ENCODE measurements at regions of chr6 and their contacts with region 1.

Region 1: DNA sequence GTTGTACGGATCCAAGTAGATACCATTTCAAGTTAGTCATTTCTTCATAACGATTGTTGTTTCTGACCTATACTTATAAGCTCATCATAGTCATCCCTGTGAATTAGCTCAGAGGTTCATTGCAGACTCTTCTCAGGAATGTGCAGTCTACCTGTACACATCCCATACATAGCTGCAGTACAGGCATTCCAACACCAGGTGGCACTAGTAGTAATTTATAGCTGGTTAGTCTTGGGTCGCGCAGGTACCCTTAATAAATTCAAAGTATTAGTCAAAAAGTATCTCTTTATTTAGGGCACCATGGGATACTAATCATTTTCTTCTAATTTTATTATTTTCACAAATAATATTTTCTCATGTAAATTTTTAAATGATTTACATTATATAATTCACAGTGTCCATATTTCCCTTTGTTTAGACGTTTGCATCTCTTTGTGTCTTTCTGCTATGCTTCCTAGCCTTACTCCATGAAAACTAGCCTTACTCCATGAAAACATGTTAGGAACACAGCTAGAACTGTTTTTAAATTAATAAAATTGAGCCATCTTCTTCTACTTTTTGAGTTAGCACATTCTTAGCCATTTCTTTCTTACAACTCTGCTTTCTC is 128.6 kb upstream of the FAM83B start:
- DNase-seq: peak in 2 of 4 donors; percentile 40 to 46
- ATAC-seq: peak; percentile 89
- H3K4me3 ChIP-seq: no peak overlapping the region
- H3K27ac ChIP-seq: no peak overlapping the region
- H3K4me1 ChIP-seq: no peaks in the 10 kb centered on the region
- H3K27me3 ChIP-seq: no peaks in the 10 kb centered on the region
- CTCF ChIP-seq: peak; percentile 76 to 82

Region 2: DNA sequence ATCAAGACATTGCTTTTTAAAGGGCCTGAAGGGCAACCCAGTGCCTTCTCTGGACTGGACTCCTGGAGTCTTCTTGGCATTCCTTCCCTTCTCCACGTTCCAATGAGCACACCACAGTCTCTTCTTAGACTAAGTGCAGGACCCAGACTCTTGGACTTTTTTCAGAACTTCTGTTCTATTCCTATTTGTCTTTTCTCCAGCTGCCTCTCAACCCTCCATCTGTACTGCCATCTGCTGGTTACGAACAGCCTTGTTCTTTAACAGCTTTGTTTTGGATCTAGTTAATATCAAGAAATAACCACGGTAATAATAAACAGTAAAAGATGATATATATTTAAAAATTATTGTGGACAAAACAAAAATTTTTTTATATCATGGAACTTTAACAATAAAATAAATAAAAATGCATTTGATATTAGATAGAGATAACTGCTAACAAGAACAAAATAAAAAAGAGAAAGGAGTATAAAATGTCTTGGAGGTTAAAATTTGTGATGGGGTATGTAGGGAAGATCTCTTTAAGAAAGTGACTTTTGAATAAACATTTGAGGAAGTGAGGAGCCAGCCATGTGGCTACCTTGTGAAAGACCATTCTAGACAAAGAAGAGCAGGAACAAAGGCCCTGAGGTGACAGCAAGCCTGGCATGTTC is 351.3 kb after region 1 on chr6:
- intact Hi-C with region 1: loop called in 1 of 2 experiments (anchors 10 kb)
- DNase-seq: peak in 2 of 4 donors; percentile 38 to 53
- ATAC-seq: peak; percentile 49
- H3K4me3 ChIP-seq: no peak overlapping the region
- H3K27ac ChIP-seq: no peak overlapping the region
- H3K4me1 ChIP-seq: no peaks in the 10 kb centered on the region
- H3K27me3 ChIP-seq: no peaks in the 10 kb centered on the region
- CTCF ChIP-seq: peak; percentile 40 to 46

Measured in left lung (tissue), 14 donors.